ENCODE measurements at regions of chr10 and their contacts with region 1.

Region 1: GRCh38 chr10:70461215-70461986 is 17.2 kb upstream of the PALD1 start:
- DNase-seq: peak; percentile 73
- ATAC-seq: peak; percentile 80
- H3K4me3 Mint-ChIP-seq: no peak overlapping the region
- H3K27ac Mint-ChIP-seq: no peak overlapping the region
- H3K4me1 Mint-ChIP-seq: peaks cover 9% of the 10 kb centered on the region
- H3K27me3 Mint-ChIP-seq: peaks cover 28% of the 10 kb centered on the region

Region 2: DNA sequence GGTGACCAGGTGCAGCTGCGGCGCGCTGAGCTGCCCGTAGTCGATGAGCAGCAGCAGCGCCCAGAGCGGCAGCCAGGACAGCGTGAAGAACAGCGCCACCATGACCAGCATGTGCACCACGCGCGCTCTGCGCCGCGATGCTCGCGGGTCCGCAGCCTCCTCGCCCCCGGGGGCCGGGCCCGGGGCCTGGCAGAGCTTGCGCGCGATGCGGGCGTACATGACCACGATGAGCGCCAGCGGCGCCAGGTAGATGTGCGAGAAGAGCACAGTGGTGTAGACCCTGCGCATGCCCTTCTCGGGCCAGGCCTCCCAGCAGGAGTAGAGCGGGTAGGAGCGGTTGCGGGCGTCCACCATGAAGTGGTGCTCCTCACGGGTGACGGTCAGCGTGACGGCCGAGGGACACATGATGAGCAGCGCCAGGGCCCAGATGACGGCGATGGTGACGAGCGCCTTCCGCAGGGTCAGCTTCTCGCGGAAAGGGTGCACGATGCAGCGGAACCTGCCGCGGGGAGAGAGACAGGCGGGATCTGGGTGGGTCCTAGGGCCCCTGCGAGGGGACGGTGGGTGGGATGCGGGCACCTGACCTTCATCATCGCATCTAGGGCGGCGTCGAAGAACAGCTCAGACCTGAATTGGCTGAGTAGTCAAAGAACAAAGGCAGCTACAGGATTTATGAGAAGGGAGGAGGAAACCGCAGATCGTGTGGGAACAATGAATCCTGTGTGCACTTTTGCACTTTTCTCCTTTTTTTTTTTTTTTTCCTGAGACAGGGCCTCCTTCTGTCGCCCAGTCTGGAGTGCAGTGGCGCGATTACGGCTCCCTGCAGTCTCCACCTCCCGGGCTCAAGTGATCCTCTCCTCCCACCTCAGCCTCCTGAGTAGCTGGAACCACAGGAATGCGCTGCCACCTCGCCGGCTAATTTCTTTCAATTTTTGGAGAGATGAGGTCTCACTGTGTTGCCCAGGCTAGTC is 205.8 kb before region 1 on chr10:
- CTCF ChIA-PET with region 1: no interaction called
- POLR2A ChIA-PET with region 1: no interaction called
- intact Hi-C with region 1: no loop called
- DNase-seq: peak; percentile 45
- ATAC-seq: peak; percentile 67
- H3K4me3 Mint-ChIP-seq: peak overlapping the region; percentile 46
- H3K27ac Mint-ChIP-seq: no peak overlapping the region
- H3K4me1 Mint-ChIP-seq: peaks cover 6% of the 10 kb centered on the region
- H3K27me3 Mint-ChIP-seq: peaks cover 42% of the 10 kb centered on the region

Region 3: GRCh38 chr10:70337201-70337651 is 124.2 kb before region 1 on chr10:
- CTCF ChIA-PET with region 1: no interaction called
- POLR2A ChIA-PET with region 1: no interaction called
- intact Hi-C with region 1: no loop called
- DNase-seq: no peak
- ATAC-seq: no peak
- H3K4me3 Mint-ChIP-seq: no peak overlapping the region
- H3K27ac Mint-ChIP-seq: no peak overlapping the region
- H3K4me1 Mint-ChIP-seq: peaks cover 4% of the 10 kb centered on the region
- H3K27me3 Mint-ChIP-seq: no peaks in the 10 kb centered on the region

Region 4: DNA sequence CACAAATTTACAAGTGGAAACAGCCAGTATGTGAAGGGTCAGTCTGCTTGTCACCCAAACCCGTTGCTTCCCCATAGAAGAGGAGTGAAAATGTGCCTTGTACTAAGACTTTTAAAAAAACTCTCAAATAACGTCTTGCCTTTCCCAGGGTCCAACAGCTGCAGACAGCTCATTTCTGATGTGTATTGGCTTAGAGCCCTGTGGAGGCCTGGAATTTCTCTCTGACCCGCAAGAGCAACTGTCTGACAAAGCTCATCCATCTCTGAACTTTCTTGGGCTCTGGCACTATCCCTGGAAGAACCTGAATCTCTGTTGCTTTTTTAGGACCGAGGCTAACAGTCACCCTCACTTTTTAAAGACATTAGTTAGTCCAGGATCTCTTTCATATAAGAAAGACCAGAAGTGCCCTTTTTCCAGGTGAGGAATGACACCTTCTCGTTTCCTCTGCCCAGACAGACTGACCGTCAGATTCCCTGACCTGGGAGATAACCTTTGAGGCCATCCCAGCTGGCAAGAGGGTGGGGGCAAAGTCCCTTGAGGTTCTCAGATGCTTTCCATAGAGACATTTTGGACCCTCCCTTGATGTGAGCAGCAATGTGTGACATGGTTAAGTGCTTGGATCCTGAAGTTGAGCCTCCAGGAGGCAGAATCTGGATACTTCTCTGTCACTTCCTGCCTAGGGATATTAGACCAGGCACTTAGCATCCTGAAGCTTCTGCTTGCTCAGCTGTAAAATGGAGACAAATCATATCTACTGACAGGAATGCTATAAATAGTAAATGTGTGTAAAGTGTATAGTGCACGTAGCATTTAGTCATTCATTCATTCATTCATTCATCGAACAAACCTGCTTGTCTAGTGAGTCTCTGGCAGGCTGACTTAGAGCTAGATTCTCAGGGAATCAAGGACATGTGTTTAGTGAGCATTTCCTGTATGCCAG is 15.4 kb before region 1 on chr10:
- CTCF ChIA-PET with region 1: interaction called, 15 read pairs
- POLR2A ChIA-PET with region 1: no interaction called
- intact Hi-C with region 1: no loop called
- DNase-seq: no peak
- ATAC-seq: no peak
- H3K4me3 Mint-ChIP-seq: no peak overlapping the region
- H3K27ac Mint-ChIP-seq: no peak overlapping the region
- H3K4me1 Mint-ChIP-seq: peaks cover 2% of the 10 kb centered on the region
- H3K27me3 Mint-ChIP-seq: peaks cover 18% of the 10 kb centered on the region

Region 5: GRCh38 chr10:70494966-70495365 is 33.6 kb after region 1 on chr10:
- CTCF ChIA-PET with region 1: interaction called, 10 read pairs
- POLR2A ChIA-PET with region 1: no interaction called
- intact Hi-C with region 1: no loop called
- DNase-seq: peak; percentile 39
- ATAC-seq: peak; percentile 49
- H3K4me3 Mint-ChIP-seq: peak overlapping the region; percentile 24
- H3K27ac Mint-ChIP-seq: peak overlapping the region; percentile 34
- H3K4me1 Mint-ChIP-seq: peaks cover 27% of the 10 kb centered on the region
- H3K27me3 Mint-ChIP-seq: peaks cover 3% of the 10 kb centered on the region

Region 6: DNA sequence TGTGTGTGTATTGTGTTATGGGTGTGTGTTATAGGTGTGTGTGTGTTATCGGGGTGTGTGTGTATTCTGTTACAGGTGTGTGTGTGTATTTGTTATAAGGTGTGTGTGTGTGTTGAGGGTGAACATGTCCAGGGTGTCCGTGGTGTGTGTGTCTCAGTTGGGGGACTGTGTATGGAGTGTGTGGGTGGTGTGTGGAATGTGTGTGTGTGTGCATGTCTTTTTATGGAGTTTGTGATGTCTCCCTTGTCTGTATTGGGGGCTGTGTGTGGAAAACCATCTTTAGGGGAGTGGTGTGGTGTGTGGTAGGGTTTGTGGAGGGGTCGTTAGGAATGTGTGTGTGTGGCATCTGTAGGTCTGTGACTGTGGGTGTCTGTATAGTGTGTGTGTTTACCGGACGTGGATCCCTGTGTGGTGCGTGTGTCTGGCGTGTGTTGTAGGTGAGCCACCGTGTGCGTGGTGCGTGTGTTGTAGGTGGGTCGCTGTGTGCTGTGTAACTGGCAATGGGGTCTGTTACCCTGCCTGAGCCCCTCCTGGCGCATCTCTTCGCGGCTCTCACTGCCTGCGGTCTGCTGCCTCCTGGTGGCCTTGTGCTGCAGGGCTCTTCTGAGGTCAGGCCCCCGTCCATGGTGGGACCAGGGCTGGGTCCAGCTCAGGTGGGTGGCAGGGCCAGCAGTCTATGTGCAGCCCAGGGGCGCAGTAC is 78.8 kb after region 1 on chr10:
- CTCF ChIA-PET with region 1: interaction called, 15 read pairs
- POLR2A ChIA-PET with region 1: no interaction called
- intact Hi-C with region 1: loop called (anchors 1 kb)
- DNase-seq: peak; percentile 50
- ATAC-seq: peak; percentile 47
- H3K4me3 Mint-ChIP-seq: no peak overlapping the region
- H3K27ac Mint-ChIP-seq: no peak overlapping the region
- H3K4me1 Mint-ChIP-seq: no peaks in the 10 kb centered on the region
- H3K27me3 Mint-ChIP-seq: no peaks in the 10 kb centered on the region

Region 7: GRCh38 chr10:70866424-70866823 is 405.0 kb after region 1 on chr10:
- CTCF ChIA-PET with region 1: no interaction called
- POLR2A ChIA-PET with region 1: no interaction called
- intact Hi-C with region 1: no loop called
- DNase-seq: no peak
- ATAC-seq: no peak
- H3K4me3 Mint-ChIP-seq: no peak overlapping the region
- H3K27ac Mint-ChIP-seq: no peak overlapping the region
- H3K4me1 Mint-ChIP-seq: peaks cover 26% of the 10 kb centered on the region
- H3K27me3 Mint-ChIP-seq: no peaks in the 10 kb centered on the region

Measured in activated CD4-positive, alpha-beta T cell treated with anti-CD3 and anti-CD28 coated beads for 36 hours (primary cell).